B cell (primary cell): ENCODE measurements at regions of chr7 and their contacts with region 1.

Region 1: DNA sequence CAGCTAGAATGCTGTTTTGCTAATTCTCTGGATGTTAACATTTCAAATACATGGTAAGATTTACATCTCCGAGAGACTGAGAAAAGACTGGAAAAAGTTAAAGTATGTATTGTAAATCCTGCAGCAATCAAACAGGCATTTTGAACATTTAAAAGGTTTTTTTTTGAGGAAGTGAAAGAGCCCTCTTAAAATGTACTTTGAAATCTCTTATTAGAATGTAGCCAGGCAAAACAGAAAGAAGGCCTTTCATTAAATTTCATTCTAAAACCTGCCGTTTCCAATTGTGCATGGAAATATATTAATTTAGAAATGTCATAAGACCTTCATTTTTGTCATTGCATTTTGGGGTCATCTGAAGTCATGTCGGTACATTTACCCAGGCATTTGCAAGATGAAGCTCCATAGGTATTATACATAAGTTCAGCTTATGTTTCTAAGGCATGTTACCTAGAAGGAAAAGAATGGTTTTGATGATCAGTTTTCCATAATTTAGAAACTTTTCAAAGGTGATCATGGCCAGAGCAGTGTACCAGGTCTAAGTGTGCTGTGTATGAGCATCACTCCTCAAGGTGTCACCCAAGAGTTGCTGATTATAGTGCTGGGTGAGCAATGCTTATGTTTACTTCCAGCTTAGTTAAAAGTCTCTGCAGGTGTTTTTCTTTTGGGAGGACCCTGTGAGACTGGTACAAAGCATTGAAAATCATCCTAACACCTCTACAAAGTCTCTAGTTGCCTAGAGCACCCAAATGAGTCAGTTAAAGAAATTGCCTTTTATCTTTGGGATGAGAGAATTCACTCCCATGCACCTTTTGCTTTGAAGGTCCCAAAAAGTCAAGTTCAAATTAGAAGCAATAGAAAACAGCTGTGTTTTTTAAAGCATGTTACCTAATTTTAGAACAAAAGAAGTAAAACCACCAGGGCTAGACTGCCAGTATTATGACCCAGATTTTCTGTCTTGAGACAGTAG is 7.1 kb downstream of the ZNF736 start:
- DNase-seq: peak; percentile 44
- ATAC-seq: peak; percentile 75
- H3K4me3 ChIP-seq: peak overlapping the region in 1 of 5 experiments; percentile 35
- H3K4me3 Mint-ChIP-seq: peak overlapping the region; percentile 53
- H3K27ac ChIP-seq: peak overlapping the region; percentile 61 to 76
- H3K27ac Mint-ChIP-seq: peak overlapping the region; percentile 74
- H3K4me1 ChIP-seq: peaks cover 23 to 26% of the 10 kb centered on the region in 2 donors
- H3K4me1 Mint-ChIP-seq: peaks cover 47% of the 10 kb centered on the region
- H3K27me3 ChIP-seq: no peaks in the 10 kb centered on the region
- H3K27me3 Mint-ChIP-seq: no peaks in the 10 kb centered on the region
- CTCF ChIP-seq: no peak

Region 2: DNA sequence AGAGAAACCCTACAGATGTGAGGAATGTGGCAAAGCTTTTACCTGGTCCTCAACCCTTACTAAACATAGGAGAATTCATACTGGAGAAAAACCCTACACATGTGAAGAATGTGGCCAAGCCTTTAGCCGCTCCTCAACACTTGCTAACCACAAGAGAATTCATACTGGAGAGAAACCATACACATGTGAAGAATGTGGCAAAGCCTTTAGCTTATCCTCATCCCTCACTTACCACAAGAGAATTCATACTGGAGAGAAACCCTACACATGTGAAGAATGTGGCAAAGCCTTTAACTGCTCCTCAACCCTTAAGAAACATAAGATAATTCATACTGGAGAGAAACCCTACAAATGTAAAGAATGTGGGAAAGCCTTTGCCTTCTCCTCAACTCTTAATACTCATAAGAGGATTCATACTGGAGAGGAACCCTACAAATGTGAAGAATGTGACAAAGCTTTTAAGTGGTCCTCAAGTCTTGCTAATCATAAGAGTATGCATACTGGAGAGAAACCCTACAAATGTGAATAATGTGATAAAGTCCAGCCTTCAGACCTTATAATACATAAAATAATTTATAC is 54.4 kb before region 1 on chr7:
- CTCF ChIA-PET with region 1: no interaction called
- POLR2A ChIA-PET with region 1: no interaction called
- intact Hi-C with region 1: loop called (anchors 10 kb)
- DNase-seq: no peak
- ATAC-seq: no peak
- H3K4me3 ChIP-seq: no peak overlapping the region
- H3K4me3 Mint-ChIP-seq: no peak overlapping the region
- H3K27ac ChIP-seq: no peak overlapping the region
- H3K27ac Mint-ChIP-seq: no peak overlapping the region
- H3K4me1 ChIP-seq: no peaks in the 10 kb centered on the region
- H3K4me1 Mint-ChIP-seq: no peaks in the 10 kb centered on the region
- H3K27me3 ChIP-seq: no peaks in the 10 kb centered on the region
- H3K27me3 Mint-ChIP-seq: no peaks in the 10 kb centered on the region
- CTCF ChIP-seq: no peak

Region 3: GRCh38 chr7:64307254-64308015 is 13.4 kb before region 1 on chr7:
- CTCF ChIA-PET with region 1: interaction called, 22 read pairs
- POLR2A ChIA-PET with region 1: interaction called, 3 read pairs
- intact Hi-C with region 1: loop called (anchors 2 kb)
- DNase-seq: peak; percentile 96
- ATAC-seq: peak; percentile 94
- H3K4me3 ChIP-seq: peak overlapping the region; percentile 55 to 87 (median 75)
- H3K4me3 Mint-ChIP-seq: peak overlapping the region; percentile 90
- H3K27ac ChIP-seq: peak overlapping the region; percentile 82 to 92
- H3K27ac Mint-ChIP-seq: peak overlapping the region; percentile 88
- H3K4me1 ChIP-seq: peaks cover 24 to 30% of the 10 kb centered on the region in 2 donors
- H3K4me1 Mint-ChIP-seq: peaks cover 37% of the 10 kb centered on the region
- H3K27me3 ChIP-seq: no peaks in the 10 kb centered on the region
- H3K27me3 Mint-ChIP-seq: no peaks in the 10 kb centered on the region
- CTCF ChIP-seq: no peak

Region 4: DNA sequence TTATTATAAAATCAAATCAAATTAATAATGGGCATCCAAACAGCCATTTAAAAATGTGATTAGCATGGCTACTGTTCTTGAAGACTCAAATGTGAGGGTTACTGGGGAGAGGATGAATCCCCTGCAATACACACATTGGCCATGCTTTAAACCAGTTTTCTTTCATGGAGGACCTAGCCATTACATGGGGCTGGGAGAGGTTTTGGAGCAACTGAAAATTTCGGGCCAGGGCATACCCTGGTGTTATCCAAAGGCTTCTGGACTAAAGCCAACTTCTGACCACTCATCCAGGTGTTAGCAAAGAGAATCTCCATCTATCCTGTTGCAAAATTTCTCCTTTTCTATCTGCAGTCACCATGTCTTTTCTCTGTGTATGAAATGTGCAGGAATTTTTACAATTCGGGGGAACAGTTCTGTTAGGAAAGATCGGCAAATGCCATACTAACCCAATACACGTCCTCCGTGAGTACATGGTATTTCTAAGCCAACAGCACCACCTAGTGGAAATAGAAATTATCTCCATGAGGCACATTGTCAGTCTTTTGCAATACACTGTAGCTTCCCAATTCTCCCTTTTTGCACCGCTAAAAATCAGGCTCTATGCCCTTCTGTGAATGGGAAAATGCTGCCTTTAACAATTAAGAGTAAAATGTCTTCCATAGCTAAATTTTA is 298.1 kb after region 1 on chr7:
- CTCF ChIA-PET with region 1: interaction called, 21 read pairs
- POLR2A ChIA-PET with region 1: no interaction called
- intact Hi-C with region 1: loop called (anchors 2 kb)
- DNase-seq: peak; percentile 68
- ATAC-seq: no peak
- H3K4me3 ChIP-seq: no peak overlapping the region
- H3K4me3 Mint-ChIP-seq: no peak overlapping the region
- H3K27ac ChIP-seq: no peak overlapping the region
- H3K27ac Mint-ChIP-seq: no peak overlapping the region
- H3K4me1 ChIP-seq: no peaks in the 10 kb centered on the region
- H3K4me1 Mint-ChIP-seq: peaks cover 1% of the 10 kb centered on the region
- H3K27me3 ChIP-seq: no peaks in the 10 kb centered on the region
- H3K27me3 Mint-ChIP-seq: no peaks in the 10 kb centered on the region
- CTCF ChIP-seq: peak; percentile 82

Region 5: GRCh38 chr7:64625114-64626082 is 304.6 kb after region 1 on chr7:
- CTCF ChIA-PET with region 1: interaction called, 21 read pairs
- POLR2A ChIA-PET with region 1: no interaction called
- intact Hi-C with region 1: no loop called
- DNase-seq: peak; percentile 44
- ATAC-seq: peak; percentile 54
- H3K4me3 ChIP-seq: no peak overlapping the region
- H3K4me3 Mint-ChIP-seq: no peak overlapping the region
- H3K27ac ChIP-seq: no peak overlapping the region
- H3K27ac Mint-ChIP-seq: no peak overlapping the region
- H3K4me1 ChIP-seq: no peaks in the 10 kb centered on the region
- H3K4me1 Mint-ChIP-seq: peaks cover 4% of the 10 kb centered on the region
- H3K27me3 ChIP-seq: no peaks in the 10 kb centered on the region
- H3K27me3 Mint-ChIP-seq: no peaks in the 10 kb centered on the region
- CTCF ChIP-seq: peak; percentile 98

Region 6: GRCh38 chr7:64630496-64630895 is 309.7 kb after region 1 on chr7:
- CTCF ChIA-PET with region 1: interaction called, 17 read pairs
- POLR2A ChIA-PET with region 1: no interaction called
- intact Hi-C with region 1: no loop called
- DNase-seq: peak; percentile 17
- ATAC-seq: peak; percentile 58
- H3K4me3 ChIP-seq: no peak overlapping the region
- H3K4me3 Mint-ChIP-seq: no peak overlapping the region
- H3K27ac ChIP-seq: no peak overlapping the region
- H3K27ac Mint-ChIP-seq: no peak overlapping the region
- H3K4me1 ChIP-seq: no peaks in the 10 kb centered on the region
- H3K4me1 Mint-ChIP-seq: peaks cover 4% of the 10 kb centered on the region
- H3K27me3 ChIP-seq: no peaks in the 10 kb centered on the region
- H3K27me3 Mint-ChIP-seq: no peaks in the 10 kb centered on the region
- CTCF ChIP-seq: peak; percentile 62